ENCODE measurements at regions of chr20 and their contacts with region 1.

Region 1: DNA sequence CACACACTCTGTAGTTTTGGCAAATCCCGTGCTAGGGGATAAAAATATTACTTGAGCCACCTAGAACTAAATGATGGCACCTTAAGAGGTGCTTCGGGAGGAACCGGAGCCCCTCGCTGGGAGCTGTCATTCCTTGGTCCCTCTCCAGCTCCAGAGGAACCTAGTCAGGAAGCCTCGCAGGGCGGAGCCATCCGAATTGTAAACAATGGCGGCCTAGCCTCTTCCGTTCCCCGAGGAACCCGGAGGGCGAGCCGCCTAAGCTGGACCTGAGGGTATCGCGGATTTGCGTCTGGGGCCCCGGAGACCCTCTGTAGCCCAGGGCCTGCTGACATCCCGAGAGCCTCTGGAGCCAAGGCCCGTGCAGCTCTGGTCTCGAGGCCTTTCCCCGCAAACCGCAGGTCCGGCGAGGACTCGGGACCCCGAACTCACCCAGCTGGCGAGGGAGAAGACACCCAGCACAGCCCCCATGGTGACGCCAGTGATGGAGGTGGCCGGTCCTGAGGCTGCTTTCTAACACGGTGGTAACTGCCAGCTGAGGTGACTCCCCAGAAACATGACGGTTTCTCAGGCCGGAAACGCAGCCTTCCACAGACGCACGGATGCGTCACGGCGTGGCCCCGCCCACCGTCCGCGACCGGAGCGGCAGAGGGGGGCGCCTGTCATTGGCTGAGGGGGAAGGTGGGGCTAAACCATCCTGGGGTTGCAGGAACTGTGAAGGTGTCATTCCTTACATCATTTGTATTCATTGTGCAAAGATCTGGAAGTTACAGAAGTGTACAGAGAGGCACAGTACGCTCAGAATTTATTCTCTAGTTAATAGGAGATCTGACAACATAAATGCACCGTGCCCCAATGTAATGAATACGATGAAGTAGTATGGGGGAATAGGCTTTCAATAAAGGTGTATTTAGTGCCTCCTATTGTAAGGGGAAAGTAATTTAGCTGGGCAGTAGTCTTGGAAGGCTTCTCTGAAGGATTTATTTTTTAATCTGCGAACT is at the start of gene SERINC3:
- DNase-seq: peak; percentile 99
- H3K4me3 Mint-ChIP-seq: peak within 1 kb of the TSS; percentile 86
- H3K27ac Mint-ChIP-seq: peak within 1 kb of the TSS; percentile 86
- H3K4me1 Mint-ChIP-seq: peaks cover 29% of the 10 kb centered on the region
- H3K27me3 Mint-ChIP-seq: no peaks in the 10 kb centered on the region
- total RNA-seq, gene SERINC3: 47.1 and 49.6 TPM in 2 replicates

Region 2: DNA sequence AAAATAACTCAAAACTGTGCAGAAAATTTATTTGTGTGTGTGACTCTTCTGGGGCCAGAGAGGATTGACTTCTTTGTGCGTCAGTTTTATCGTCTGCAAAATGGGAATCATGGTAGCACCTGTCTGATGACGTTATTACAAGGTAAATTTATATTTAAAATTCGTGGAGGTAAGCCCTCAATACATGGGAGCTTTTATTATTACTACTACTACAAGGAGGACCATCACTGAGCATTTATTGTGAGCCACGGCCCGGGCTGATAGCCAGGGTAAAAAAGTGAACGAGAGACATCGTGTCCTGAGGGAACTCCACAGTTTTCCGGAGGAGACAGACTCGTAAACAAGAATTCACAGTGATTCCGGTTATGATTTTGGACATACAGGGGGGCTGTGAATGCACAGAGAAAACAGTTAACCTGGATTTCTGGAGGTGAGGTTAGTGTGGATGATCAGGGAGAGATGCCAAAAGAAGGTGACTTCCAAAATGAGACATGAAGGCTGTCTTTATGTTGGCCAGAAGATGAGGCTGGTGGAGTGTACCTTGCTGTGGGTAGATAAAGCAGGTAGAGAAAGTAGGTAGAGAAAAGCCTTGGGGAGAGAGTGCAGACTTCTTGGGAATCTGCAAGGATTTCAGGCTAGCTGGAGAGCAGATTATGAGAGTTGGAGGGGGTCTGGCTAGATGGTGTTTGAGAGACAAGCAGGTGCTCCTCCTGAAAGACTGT is 10.6 kb after region 1 on chr20:
- intact Hi-C with region 1: loop called (anchors 1 kb)
- DNase-seq: no peak
- H3K4me3 Mint-ChIP-seq: no peak overlapping the region
- H3K27ac Mint-ChIP-seq: no peak overlapping the region
- H3K4me1 Mint-ChIP-seq: peaks cover 5% of the 10 kb centered on the region
- H3K27me3 Mint-ChIP-seq: peaks cover 7% of the 10 kb centered on the region

Region 3: DNA sequence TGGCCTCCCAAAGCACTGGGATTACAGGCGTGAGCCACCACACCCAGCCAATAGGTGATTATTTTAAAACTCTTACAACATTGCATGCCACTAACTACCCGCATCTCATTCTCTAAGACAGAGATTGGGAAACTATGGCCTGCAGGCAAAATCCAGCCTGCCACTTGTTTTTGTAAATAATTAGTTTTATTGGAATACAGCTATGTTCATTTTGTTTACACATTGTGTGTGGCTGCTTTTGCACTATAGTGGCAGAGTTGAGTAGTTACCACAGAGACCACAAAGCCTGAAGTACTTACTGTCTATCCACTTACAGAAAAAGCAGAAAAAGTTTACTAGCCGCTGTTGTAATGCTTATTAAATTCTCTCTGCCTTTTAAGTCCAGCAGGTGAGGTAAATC is 44.2 kb after region 1 on chr20:
- intact Hi-C with region 1: no loop called
- DNase-seq: no peak
- H3K4me3 Mint-ChIP-seq: no peak overlapping the region
- H3K27ac Mint-ChIP-seq: no peak overlapping the region
- H3K4me1 Mint-ChIP-seq: no peaks in the 10 kb centered on the region
- H3K27me3 Mint-ChIP-seq: peaks cover 14% of the 10 kb centered on the region

Region 4: DNA sequence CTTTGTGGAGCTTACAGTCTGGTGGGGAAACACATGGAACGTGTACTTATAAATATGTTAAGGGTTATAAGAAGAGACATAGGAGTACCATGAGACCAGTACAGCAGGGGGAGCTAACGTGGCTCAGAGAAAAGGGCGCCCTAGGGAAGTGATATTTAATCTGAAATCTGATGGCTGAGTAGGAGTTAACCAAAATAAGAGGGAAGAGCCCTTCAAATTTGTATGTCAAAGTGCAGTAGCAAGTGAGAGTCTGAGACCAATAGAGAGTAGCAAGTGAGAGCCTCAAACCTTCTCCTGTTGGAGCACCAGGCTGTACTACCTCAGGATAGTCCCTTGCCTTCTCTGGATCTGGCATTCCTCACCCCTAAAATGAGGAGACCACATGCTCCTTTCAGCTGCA is 54.5 kb after region 1 on chr20:
- intact Hi-C with region 1: loop called (anchors 2 kb)
- DNase-seq: no peak
- H3K4me3 Mint-ChIP-seq: no peak overlapping the region
- H3K27ac Mint-ChIP-seq: peak overlapping the region; percentile 79
- H3K4me1 Mint-ChIP-seq: peaks cover 22% of the 10 kb centered on the region
- H3K27me3 Mint-ChIP-seq: no peaks in the 10 kb centered on the region

Region 5: GRCh38 chr20:44622501-44623270 is 100.9 kb after region 1 on chr20:
- intact Hi-C with region 1: no loop called
- DNase-seq: no peak
- H3K4me3 Mint-ChIP-seq: no peak overlapping the region
- H3K27ac Mint-ChIP-seq: no peak overlapping the region
- H3K4me1 Mint-ChIP-seq: peaks cover 10% of the 10 kb centered on the region
- H3K27me3 Mint-ChIP-seq: no peaks in the 10 kb centered on the region

Measured in activated CD4-positive, alpha-beta T cell treated with anti-CD3 and anti-CD28 coated beads, Interleukin-2, amount 10 ng/mL, durations not matched to agents 24 days and 14 days (primary cell).